Sigmoid colon (tissue), 7 donors: ENCODE measurements at regions of chr9 and their contacts with region 1.

Region 1: GRCh38 chr9:127980706-127981558 is at the start of gene EEIG1:
- DNase-seq: peak; percentile 97
- H3K4me3 ChIP-seq: peak within 1 kb of the TSS; percentile 61 to 96 (median 83)
- H3K27ac ChIP-seq: peak within 1 kb of the TSS; percentile 94 to 99 (median 96)
- H3K4me1 ChIP-seq: peaks cover 0 to 52% (median 42%) of the 10 kb centered on the region in 4 donors
- H3K27me3 ChIP-seq: no peaks in the 10 kb centered on the region
- CTCF ChIP-seq: no peak
- EP300 ChIP-seq: peak in 1 of 4 donors; percentile 3
- POLR2A ChIP-seq: peak; percentile 48 to 84
- total RNA-seq, gene EEIG1: 10.9 to 32.7 (median 19.2) TPM

Region 2: GRCh38 chr9:127943731-127944144 is 37.2 kb before region 1 on chr9:
- intact Hi-C with region 1: loop called (anchors 1 kb)
- DNase-seq: peak; percentile 94
- H3K4me3 ChIP-seq: no peak overlapping the region
- H3K27ac ChIP-seq: peak overlapping the region; percentile 1 to 48 (median 45)
- H3K4me1 ChIP-seq: peaks cover 0 to 38% (median 35%) of the 10 kb centered on the region in 4 donors
- H3K27me3 ChIP-seq: no peaks in the 10 kb centered on the region
- CTCF ChIP-seq: peak; percentile 84 to 97 (median 95)
- EP300 ChIP-seq: no peak
- POLR2A ChIP-seq: no peak

Region 3: GRCh38 chr9:127955294-127956035 is 25.5 kb before region 1 on chr9:
- intact Hi-C with region 1: loop called (anchors 2 kb)
- DNase-seq: peak; percentile 89
- H3K4me3 ChIP-seq: no peak overlapping the region
- H3K27ac ChIP-seq: peak overlapping the region; percentile 48 to 84 (median 76)
- H3K4me1 ChIP-seq: peaks cover 0 to 61% (median 60%) of the 10 kb centered on the region in 4 donors
- H3K27me3 ChIP-seq: no peaks in the 10 kb centered on the region
- CTCF ChIP-seq: peak in 3 of 4 experiments; percentile 42 to 81 (median 44)
- EP300 ChIP-seq: peak in 2 of 4 donors; percentile 10 to 71
- POLR2A ChIP-seq: no peak

Region 4: DNA sequence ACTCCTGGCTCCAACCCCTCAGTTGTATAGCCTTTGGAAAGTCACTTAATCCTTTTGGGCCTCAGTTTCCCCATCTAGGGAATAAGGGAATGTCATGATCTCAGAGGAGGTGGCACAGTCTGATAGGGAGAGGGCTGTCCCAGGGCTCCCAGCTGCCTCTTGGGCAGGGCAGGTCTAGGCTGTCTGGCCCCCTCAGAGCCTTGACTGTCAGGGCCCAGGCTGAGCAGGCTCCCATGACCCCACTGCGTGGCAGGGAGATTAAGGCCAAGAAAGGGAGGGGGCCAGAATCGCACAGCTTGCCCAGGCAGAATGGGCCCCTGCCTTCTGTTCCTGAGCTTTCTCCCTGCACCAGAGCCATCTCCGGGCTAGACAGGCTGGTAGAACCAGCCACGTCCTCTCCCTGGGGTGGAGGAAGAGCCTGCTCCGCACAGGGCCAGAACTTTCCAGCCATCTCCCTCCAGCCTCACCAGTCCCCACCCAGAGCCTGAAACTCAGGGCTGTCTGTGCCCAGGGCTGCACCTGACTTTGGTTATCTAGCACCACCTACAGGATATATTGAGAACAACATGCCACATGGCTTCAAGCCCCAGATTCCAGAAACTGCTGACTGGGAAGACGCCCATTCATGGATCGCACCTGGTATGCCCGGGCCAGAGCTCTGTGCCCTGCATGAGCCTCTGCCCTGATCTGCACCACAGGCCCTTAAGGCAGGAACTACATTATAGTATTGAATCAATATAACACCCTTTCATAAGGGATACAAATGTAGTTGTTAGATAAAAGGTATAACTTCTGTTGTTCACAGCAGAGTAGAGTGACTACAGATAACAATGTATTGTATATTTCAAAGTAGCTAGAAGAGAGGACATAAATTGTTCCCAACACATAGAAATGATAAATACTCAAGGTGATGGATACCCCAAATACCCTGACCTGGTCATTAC is 54.2 kb after region 1 on chr9:
- intact Hi-C with region 1: loop called (anchors 2 kb)
- DNase-seq: peak; percentile 91
- H3K4me3 ChIP-seq: no peak overlapping the region
- H3K27ac ChIP-seq: no peak overlapping the region
- H3K4me1 ChIP-seq: peaks cover 0 to 5% (median 2%) of the 10 kb centered on the region in 4 donors
- H3K27me3 ChIP-seq: no peaks in the 10 kb centered on the region
- CTCF ChIP-seq: peak; percentile 89 to 96 (median 92)
- EP300 ChIP-seq: no peak
- POLR2A ChIP-seq: no peak

Region 5: GRCh38 chr9:128127990-128128835 is 147.3 kb after region 1 on chr9:
- intact Hi-C with region 1: loop called (anchors 5 kb)
- DNase-seq: peak; percentile 89
- H3K4me3 ChIP-seq: peak overlapping the region; percentile 76 to 99 (median 96)
- H3K27ac ChIP-seq: peak overlapping the region; percentile 90 to 97 (median 92)
- H3K4me1 ChIP-seq: peaks cover 0 to 39% (median 35%) of the 10 kb centered on the region in 4 donors
- H3K27me3 ChIP-seq: no peaks in the 10 kb centered on the region
- CTCF ChIP-seq: no peak
- EP300 ChIP-seq: no peak
- POLR2A ChIP-seq: peak; percentile 28 to 33